Stomach (tissue), 19 donors: ENCODE measurements at regions of chr6 and their contacts with region 1.

Region 1: GRCh38 chr6:25435416-25435985 is 156.3 kb downstream of the CARMIL1 start:
- DNase-seq: no peak
- H3K4me3 ChIP-seq: no peak overlapping the region
- H3K27ac ChIP-seq: no peak overlapping the region
- H3K4me1 ChIP-seq: no peaks in the 10 kb centered on the region
- H3K27me3 ChIP-seq: no peaks in the 10 kb centered on the region
- CTCF ChIP-seq: no peak
- EP300 ChIP-seq: no peak
- POLR2A ChIP-seq: no peak

Region 2: GRCh38 chr6:25942561-25943147 is 507.2 kb after region 1 on chr6:
- intact Hi-C with region 1: loop called (anchors 10 kb)
- DNase-seq: peak in 1 of 2 donors; percentile 65
- H3K4me3 ChIP-seq: no peak overlapping the region
- H3K27ac ChIP-seq: no peak overlapping the region
- H3K4me1 ChIP-seq: no peaks in the 10 kb centered on the region
- H3K27me3 ChIP-seq: no peaks in the 10 kb centered on the region
- CTCF ChIP-seq: peak in 3 of 7 experiments; percentile 18 to 39 (median 22)
- EP300 ChIP-seq: no peak
- POLR2A ChIP-seq: no peak